ENCODE measurements at regions of chr1 and their contacts with region 1.

Region 1: DNA sequence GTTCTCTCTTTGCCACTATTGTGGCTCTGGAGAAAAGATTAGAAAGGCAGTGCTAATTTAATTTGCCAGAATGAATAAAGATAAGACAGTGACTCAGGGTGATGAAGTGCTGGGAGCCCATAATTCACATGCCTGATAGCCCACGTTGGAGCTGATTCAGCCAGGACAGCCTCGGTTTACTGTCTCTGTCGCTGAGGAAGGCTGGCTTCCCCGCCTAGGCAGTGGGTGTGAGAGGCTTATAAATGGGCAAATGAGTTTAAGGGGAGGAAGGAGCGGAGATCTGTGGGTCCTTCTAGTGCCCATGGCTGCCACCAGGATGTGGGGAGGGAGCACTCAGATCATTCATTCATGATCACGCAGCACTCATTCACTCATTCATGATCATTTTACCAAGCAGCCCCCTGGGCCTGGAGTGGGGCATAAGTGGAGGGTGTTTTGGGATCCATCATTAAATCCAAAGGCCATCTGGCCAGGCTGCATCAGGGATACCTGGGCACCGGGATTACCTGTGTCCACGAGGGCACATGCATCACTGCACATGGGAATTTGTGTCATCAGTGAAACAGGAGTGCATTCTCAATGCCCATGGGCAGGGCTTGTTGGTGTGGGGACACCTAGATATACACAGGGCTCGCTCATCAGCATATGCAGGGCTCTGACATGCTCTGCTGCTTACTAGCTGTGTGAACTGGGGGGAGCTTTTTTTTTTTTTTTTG is 315.4 kb downstream of the MATN1 start:
- DNase-seq: no peak
- ATAC-seq: no peak
- H3K4me3 ChIP-seq: no peak overlapping the region
- H3K27ac ChIP-seq: no peak overlapping the region
- H3K4me1 ChIP-seq: no peaks in the 10 kb centered on the region
- H3K27me3 ChIP-seq: no peaks in the 10 kb centered on the region
- CTCF ChIP-seq: no peak
- POLR2A ChIP-seq: no peak

Region 2: GRCh38 chr1:29396438-29397255 is 1011.4 kb before region 1 on chr1:
- in situ Hi-C with region 1: loop called in 3 of 4 experiments (anchors 5 to 10 kb)
- intact Hi-C with region 1: no loop called
- DNase-seq: no peak
- ATAC-seq: no peak
- H3K4me3 ChIP-seq: no peak overlapping the region
- H3K27ac ChIP-seq: no peak overlapping the region
- H3K4me1 ChIP-seq: no peaks in the 10 kb centered on the region
- H3K27me3 ChIP-seq: peaks cover 0 to 3% (median 0%) of the 10 kb centered on the region in 3 donors
- CTCF ChIP-seq: no peak
- POLR2A ChIP-seq: no peak

Region 3: GRCh38 chr1:30572192-30572591 is 164.2 kb after region 1 on chr1:
- in situ Hi-C with region 1: no loop called
- intact Hi-C with region 1: loop called (anchors 5 kb)
- DNase-seq: no peak
- ATAC-seq: peak; percentile 65 to 66
- H3K4me3 ChIP-seq: no peak overlapping the region
- H3K27ac ChIP-seq: no peak overlapping the region
- H3K4me1 ChIP-seq: no peaks in the 10 kb centered on the region
- H3K27me3 ChIP-seq: no peaks in the 10 kb centered on the region
- CTCF ChIP-seq: peak in 2 of 5 experiments; percentile 25 to 34
- POLR2A ChIP-seq: no peak

Measured in gastrocnemius medialis (tissue), 4 donors.